ENCODE measurements at regions of chr20 and their contacts with region 1.

Region 1: DNA sequence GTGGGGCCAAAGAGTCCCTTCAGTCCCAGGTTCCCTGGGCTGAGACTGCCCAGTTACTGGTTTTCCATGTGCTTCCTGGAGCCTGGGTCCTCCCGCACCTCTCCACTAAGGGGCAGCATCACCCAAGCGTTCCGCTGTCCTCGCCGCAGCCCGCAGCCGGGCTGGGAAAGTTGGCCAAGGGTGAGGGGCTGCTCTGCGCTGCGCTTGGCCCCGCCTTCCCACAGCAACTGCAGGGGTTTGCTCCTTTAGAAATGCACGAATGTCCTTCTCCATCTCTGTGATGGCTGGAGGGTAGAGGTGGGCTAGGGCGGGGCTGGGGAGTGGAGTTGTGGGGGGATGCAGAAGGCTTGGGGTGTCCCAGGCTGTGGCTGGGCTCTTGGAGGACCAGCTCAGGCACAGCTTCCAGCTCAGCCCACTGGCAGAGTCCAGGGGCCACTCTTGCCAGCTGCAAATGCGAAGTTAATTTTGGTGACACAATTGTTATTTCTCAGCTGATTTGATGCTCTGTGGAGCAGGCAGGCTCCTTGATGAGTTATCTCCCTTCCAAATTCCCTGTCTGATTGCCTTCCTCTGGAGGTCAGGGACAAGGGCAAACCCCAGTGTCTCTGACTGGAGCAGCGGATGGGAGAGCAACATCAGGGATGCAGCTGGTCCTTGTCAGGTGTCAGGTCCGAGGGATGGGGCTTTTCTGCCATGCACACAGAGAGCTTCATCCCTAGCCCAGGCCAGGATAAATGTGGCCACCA is 63.2 kb downstream of the NOL4L start:
- DNase-seq: peak; percentile 55
- H3K4me3 Mint-ChIP-seq: no peak overlapping the region
- H3K27ac Mint-ChIP-seq: no peak overlapping the region
- H3K4me1 Mint-ChIP-seq: peaks cover 5% of the 10 kb centered on the region
- H3K27me3 Mint-ChIP-seq: no peaks in the 10 kb centered on the region
- CTCF ChIP-seq: peak; percentile 87

Region 2: DNA sequence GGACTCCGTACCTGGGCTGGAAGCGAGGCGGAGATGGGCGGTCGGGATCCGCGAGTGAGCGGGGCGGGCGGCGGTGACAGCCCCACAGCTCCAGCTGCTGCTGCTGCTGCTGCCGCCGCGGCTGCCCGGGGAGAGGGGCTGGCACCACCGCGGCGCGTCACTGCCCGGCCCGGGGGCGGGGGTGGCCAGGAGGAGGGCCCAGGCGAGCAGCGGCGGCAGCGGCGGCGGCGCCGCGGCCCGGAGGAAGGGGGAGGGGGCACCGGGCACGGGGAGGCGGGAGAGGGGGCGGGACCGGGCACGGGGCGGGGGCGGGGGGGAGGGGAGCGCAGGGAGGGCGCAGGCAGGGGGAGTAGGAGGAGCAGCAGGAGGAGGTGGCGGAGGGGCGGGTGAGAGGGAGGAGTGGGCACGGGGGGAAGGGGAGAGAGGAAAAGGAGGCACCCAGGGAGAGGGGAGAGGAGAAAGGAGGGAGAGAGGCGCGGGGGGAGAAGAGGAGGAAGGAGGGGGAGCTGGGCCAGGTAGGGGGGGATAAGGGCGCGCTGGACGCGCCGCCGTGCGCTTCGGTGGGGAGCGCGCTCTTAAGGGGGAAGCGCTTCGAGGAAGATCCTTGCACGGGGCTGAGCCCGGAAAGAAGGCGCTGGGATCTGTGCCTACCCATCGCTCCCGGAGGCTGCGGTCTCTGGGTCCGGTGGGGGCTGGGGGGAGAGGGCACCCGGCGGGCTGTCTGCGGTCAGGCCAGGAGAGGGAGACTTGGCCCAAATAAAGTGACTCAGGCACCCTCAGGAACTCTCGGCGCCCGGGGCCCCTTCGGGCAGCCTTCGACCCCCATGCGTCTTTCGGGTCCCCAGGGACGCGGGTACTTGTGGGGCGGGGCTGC is 38.4 kb before region 1 on chr20:
- CTCF ChIA-PET with region 1: no interaction called
- POLR2A ChIA-PET with region 1: no interaction called
- intact Hi-C with region 1: no loop called
- DNase-seq: peak; percentile 63
- H3K4me3 Mint-ChIP-seq: peak overlapping the region; percentile 75
- H3K27ac Mint-ChIP-seq: no peak overlapping the region
- H3K4me1 Mint-ChIP-seq: peaks cover 8% of the 10 kb centered on the region
- H3K27me3 Mint-ChIP-seq: peaks cover 30% of the 10 kb centered on the region
- CTCF ChIP-seq: no peak

Region 3: DNA sequence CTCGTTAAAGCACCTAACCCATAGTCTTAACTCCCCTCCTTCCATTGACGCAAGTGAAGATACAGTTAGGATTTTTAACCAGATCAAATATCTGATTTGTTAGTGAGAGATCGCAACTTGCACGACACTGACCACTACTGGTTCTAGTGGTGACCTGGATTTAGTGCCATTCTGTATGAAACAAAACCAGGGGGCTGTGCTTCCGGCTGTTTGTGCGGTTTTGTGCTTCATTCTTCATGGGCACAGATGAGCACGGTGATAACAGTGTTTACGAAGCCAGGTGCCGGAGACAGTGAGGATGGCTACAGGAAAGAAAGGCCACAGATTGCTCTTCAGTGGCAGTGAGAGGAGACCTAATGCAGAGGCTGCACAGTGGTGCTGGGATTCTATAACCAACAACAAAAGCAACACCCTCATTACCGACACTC is 12.3 kb before region 1 on chr20:
- CTCF ChIA-PET with region 1: interaction called, 28 read pairs
- POLR2A ChIA-PET with region 1: interaction called, 4 read pairs
- intact Hi-C with region 1: no loop called
- DNase-seq: no peak
- H3K4me3 Mint-ChIP-seq: no peak overlapping the region
- H3K27ac Mint-ChIP-seq: no peak overlapping the region
- H3K4me1 Mint-ChIP-seq: no peaks in the 10 kb centered on the region
- H3K27me3 Mint-ChIP-seq: no peaks in the 10 kb centered on the region
- CTCF ChIP-seq: no peak

Region 4: DNA sequence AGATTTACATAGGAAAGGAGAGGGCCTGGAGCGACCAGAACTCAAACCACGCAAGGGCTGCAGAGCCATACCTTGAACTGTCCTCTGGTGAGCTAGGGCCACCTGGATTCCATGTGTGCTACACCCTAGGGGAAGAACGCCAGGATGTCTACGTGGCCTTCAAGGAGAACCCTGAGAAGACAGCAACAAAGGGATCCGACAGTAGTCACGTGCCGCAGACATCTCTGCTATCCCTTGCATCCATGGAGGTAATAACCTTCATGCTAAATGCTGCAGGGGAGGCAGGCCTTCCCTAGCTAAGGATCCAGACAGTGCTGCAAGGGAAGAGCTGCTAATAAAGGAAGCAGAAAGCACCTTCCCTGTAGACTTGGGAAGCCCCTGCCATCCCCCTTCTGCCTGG is 10.3 kb after region 1 on chr20:
- CTCF ChIA-PET with region 1: interaction called, 10 read pairs
- POLR2A ChIA-PET with region 1: no interaction called
- intact Hi-C with region 1: no loop called
- DNase-seq: no peak
- H3K4me3 Mint-ChIP-seq: no peak overlapping the region
- H3K27ac Mint-ChIP-seq: no peak overlapping the region
- H3K4me1 Mint-ChIP-seq: peaks cover 5% of the 10 kb centered on the region
- H3K27me3 Mint-ChIP-seq: no peaks in the 10 kb centered on the region
- CTCF ChIP-seq: no peak

Region 5: DNA sequence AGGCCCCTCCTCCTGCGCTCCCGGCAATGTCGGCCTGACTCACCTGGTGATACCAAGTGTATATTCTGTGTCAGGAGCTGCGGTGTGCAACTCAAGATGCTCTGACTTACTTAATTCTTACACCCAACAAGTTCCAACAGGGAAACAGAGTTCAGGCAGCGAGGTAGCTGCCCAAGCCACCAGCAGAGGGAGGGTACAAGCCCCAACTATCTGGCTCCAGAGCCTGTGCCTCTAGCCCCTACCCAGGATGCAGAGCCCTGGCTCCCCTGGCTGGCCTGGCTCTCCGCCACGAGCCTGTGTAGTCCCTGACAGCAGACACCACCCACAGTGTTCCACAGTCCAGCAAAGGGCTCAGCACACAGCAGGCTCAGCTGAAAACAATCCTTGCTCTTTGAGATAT is 116.9 kb after region 1 on chr20:
- CTCF ChIA-PET with region 1: interaction called, 14 read pairs
- POLR2A ChIA-PET with region 1: no interaction called
- intact Hi-C with region 1: no loop called
- DNase-seq: peak; percentile 61
- H3K4me3 Mint-ChIP-seq: no peak overlapping the region
- H3K27ac Mint-ChIP-seq: no peak overlapping the region
- H3K4me1 Mint-ChIP-seq: no peaks in the 10 kb centered on the region
- H3K27me3 Mint-ChIP-seq: no peaks in the 10 kb centered on the region
- CTCF ChIP-seq: no peak

Region 6: DNA sequence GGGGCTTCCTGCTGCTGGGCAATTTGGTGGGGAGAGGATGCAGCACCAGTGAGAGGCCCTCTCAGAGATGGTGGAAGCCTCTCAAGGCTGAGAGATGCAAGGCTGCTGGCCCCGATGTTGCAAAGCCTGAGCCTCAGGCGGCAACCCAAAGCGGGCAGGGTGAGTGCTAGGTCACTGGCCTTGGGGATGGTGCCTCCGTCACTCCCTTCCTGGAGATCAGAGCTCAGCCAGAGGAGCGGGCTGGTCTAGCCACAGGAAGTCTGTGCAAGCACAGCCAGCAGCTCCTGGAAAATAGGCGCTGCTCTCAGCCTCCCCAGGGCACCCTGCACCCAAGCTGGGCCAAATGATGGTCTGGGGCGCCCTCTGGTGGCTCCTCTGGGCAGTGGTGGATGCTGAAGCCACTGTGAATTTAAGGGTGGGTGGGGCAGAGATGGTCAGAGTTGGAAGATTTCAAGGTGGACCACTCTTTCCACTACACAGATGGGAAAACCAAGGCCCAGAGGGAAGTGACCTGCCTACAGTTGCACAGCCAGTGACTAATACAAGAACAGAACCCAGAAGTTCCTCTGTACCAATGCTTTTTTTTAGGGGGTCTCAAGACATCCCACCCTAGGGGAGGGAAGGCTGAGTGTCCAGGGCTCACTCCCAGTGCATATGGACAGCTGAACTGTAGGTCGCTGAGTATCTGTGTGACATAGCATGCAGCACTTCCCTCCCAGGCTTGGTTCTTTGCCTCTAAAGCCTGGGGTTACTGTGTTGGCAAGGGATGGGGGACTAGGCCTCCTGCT is 131.0 kb after region 1 on chr20:
- CTCF ChIA-PET with region 1: interaction called, 360 read pairs
- POLR2A ChIA-PET with region 1: interaction called, 5 read pairs
- intact Hi-C with region 1: loop called (anchors 1 kb)
- DNase-seq: peak; percentile 84
- H3K4me3 Mint-ChIP-seq: no peak overlapping the region
- H3K27ac Mint-ChIP-seq: no peak overlapping the region
- H3K4me1 Mint-ChIP-seq: peaks cover 3% of the 10 kb centered on the region
- H3K27me3 Mint-ChIP-seq: no peaks in the 10 kb centered on the region
- CTCF ChIP-seq: peak; percentile 94

Region 7: DNA sequence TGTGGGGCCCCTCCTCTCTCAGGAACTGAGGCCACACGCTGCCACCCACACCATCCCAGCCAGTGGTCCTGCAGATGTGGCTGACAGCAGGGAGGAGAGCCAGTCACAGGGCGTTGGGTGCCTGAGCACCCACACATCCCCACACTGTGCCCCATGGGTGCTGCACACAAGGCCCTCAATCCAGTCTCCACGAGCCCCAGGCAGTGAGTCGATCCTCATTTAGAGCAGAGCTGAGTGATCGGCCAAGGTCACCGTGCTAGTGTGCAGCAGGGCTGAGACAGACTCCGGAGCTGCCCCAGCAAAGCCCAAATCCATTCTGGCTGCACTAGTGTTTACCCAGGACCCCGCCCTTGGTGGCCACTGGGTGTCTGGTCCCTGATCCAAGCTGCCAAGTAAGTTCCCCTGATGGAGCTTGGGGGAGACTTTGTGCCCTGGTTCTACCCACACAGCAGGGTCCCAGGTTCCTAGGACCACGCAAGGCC is 142.8 kb after region 1 on chr20:
- CTCF ChIA-PET with region 1: interaction called, 360 read pairs
- POLR2A ChIA-PET with region 1: no interaction called
- intact Hi-C with region 1: no loop called
- DNase-seq: no peak
- H3K4me3 Mint-ChIP-seq: no peak overlapping the region
- H3K27ac Mint-ChIP-seq: no peak overlapping the region
- H3K4me1 Mint-ChIP-seq: peaks cover 6% of the 10 kb centered on the region
- H3K27me3 Mint-ChIP-seq: no peaks in the 10 kb centered on the region
- CTCF ChIP-seq: no peak